H1 (cell line): ENCODE measurements at regions of chr7 and their contacts with region 1.

Region 1: GRCh38 chr7:151028131-151028947 is at the start of gene ABCB8:
- DNase-seq: peak; percentile 99
- H3K4me3 ChIP-seq: peak within 1 kb of the TSS; percentile 66 to 97 (median 80)
- H3K27ac ChIP-seq: peak within 1 kb of the TSS; percentile 15; the same call in 1 of the 2 replicates
- H3K4me1 ChIP-seq: peaks cover 0 to 4% (median 2%) of the 10 kb centered on the region in 4 experiments; a peak in 2 of 7 replicates
- H3K27me3 ChIP-seq: peaks cover 0 to 4% (median 0%) of the 10 kb centered on the region in 4 experiments; a peak in 2 of 7 replicates
- CTCF ChIP-seq: peak; percentile 23 to 43 (median 30)
- EP300 ChIP-seq: no peak
- POLR2A ChIP-seq: no peak
- RAD21 ChIP-seq: peak; percentile 21 to 51; a peak in 3 of 4 replicates
- total RNA-seq, gene ABCB8: 22.2 and 27.0 TPM in 2 replicates

Region 2: DNA sequence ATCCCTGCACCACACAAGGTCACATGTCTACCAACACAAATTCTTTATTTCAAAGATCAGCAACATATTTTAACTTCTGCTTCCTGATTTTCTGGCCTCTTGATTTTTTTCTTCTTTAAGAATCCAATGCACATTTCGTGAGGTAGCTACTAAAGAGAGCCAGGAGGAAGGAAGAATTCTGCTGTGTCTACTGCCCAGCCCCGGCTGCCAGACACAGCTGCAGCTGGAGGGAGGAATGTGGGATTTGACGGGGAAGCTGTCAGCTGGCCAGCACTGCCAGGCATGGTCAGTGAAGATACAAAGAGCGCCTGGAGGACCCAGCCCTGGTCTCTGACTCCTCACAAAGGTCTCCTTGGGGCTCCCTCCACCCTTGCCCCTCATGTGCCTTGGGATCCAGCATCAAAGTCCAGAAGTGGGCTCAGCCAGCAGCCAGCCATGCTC is 182.9 kb before region 1 on chr7:
- CTCF ChIA-PET with region 1: no interaction called
- POLR2A ChIA-PET with region 1: no interaction called
- DNase-seq: no peak
- H3K4me3 ChIP-seq: no peak overlapping the region
- H3K27ac ChIP-seq: no peak overlapping the region
- H3K4me1 ChIP-seq: no peaks in the 10 kb centered on the region
- H3K27me3 ChIP-seq: no peaks in the 10 kb centered on the region
- CTCF ChIP-seq: no peak
- EP300 ChIP-seq: no peak
- POLR2A ChIP-seq: no peak
- RAD21 ChIP-seq: no peak

Region 3: DNA sequence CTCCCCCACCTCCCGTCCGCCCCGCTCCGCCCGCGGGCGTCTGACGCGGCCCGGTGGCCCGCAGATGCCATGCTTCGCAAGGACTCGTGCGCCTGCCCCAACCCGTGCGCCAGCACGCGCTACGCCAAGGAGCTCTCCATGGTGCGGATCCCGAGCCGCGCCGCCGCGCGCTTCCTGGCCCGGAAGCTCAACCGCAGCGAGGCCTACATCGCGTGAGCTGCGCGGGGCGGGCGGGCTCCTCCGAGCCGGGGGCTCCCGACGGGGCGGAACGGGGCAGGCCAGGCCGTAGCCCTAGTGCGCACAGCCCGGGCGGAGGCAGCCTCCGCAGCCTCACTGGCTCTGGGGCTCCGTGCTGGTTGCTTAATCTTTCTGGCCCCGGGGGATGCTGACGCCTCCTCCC is 22.8 kb after region 1 on chr7:
- CTCF ChIA-PET with region 1: interaction called, 30 read pairs
- POLR2A ChIA-PET with region 1: interaction called, 4 read pairs
- DNase-seq: peak in 1 of 2 experiments; percentile 92
- H3K4me3 ChIP-seq: peak overlapping the region in 1 of 4 experiments; percentile 39; a peak in 2 of 8 replicates
- H3K27ac ChIP-seq: no peak overlapping the region
- H3K4me1 ChIP-seq: peaks cover 0 to 8% (median 5%) of the 10 kb centered on the region in 4 experiments; a peak in 3 of 7 replicates
- H3K27me3 ChIP-seq: peaks cover 4 to 33% (median 26%) of the 10 kb centered on the region in 4 experiments
- CTCF ChIP-seq: peak in 1 of 3 experiments; percentile 4; a peak in 1 of 4 replicates
- EP300 ChIP-seq: peak in 1 of 2 experiments; percentile 79; a peak in 2 of 3 replicates
- POLR2A ChIP-seq: no peak
- RAD21 ChIP-seq: peak in 1 of 2 experiments; percentile 20; a peak in 1 of 4 replicates